Mammary epithelial cell (primary cell): ENCODE measurements at regions of chr3 and their contacts with region 1.

Region 1: GRCh38 chr3:57017459-57017845 is 43.0 kb upstream of the SPATA12 start:
- DNase-seq: no peak
- H3K4me3 ChIP-seq: no peak overlapping the region
- H3K27ac ChIP-seq: no peak overlapping the region
- H3K4me1 ChIP-seq: peaks cover 20% of the 10 kb centered on the region
- H3K27me3 ChIP-seq: no peaks in the 10 kb centered on the region
- CTCF ChIP-seq: no peak

Region 2: GRCh38 chr3:57060089-57060829 is 42.8 kb after region 1 on chr3 and contains the start of gene SPATA12:
- CTCF ChIA-PET with region 1: no interaction called
- dilution Hi-C with region 1: loop called (anchors 5 kb)
- in situ Hi-C with region 1: no loop called
- intact Hi-C with region 1: loop called (anchors 2 kb)
- DNase-seq: peak; percentile 98
- H3K4me3 ChIP-seq: no peak within 1 kb of the TSS
- H3K27ac ChIP-seq: peak within 1 kb of the TSS; percentile 88
- H3K4me1 ChIP-seq: peaks cover 30% of the 10 kb centered on the region
- H3K27me3 ChIP-seq: no peaks in the 10 kb centered on the region
- CTCF ChIP-seq: no peak
- total RNA-seq, gene SPATA12: 0.21 TPM in 1 of 2 donors, not detected in the other

Region 3: GRCh38 chr3:57078344-57078634 is 60.8 kb after region 1 on chr3:
- CTCF ChIA-PET with region 1: no interaction called
- dilution Hi-C with region 1: loop called (anchors 5 kb)
- in situ Hi-C with region 1: no loop called
- intact Hi-C with region 1: no loop called
- DNase-seq: peak; percentile 28
- H3K4me3 ChIP-seq: peak overlapping the region; percentile 80 to 92 (median 87)
- H3K27ac ChIP-seq: no peak overlapping the region
- H3K4me1 ChIP-seq: peaks cover 6% of the 10 kb centered on the region
- H3K27me3 ChIP-seq: no peaks in the 10 kb centered on the region
- CTCF ChIP-seq: no peak

Region 4: GRCh38 chr3:57091521-57092273 is 74.2 kb after region 1 on chr3:
- CTCF ChIA-PET with region 1: no interaction called
- dilution Hi-C with region 1: no loop called
- in situ Hi-C with region 1: no loop called
- intact Hi-C with region 1: no loop called
- DNase-seq: no peak
- H3K4me3 ChIP-seq: no peak overlapping the region
- H3K27ac ChIP-seq: no peak overlapping the region
- H3K4me1 ChIP-seq: no peaks in the 10 kb centered on the region
- H3K27me3 ChIP-seq: no peaks in the 10 kb centered on the region
- CTCF ChIP-seq: no peak

Region 5: GRCh38 chr3:57421336-57421735 is 403.9 kb after region 1 on chr3:
- CTCF ChIA-PET with region 1: no interaction called
- dilution Hi-C with region 1: no loop called
- in situ Hi-C with region 1: no loop called
- intact Hi-C with region 1: no loop called
- DNase-seq: peak; percentile 1
- H3K4me3 ChIP-seq: no peak overlapping the region
- H3K27ac ChIP-seq: no peak overlapping the region
- H3K4me1 ChIP-seq: no peaks in the 10 kb centered on the region
- H3K27me3 ChIP-seq: peaks cover 4% of the 10 kb centered on the region
- CTCF ChIP-seq: no peak